A673 (cell line): ENCODE measurements at regions of chr9 and their contacts with region 1.

Region 1: DNA sequence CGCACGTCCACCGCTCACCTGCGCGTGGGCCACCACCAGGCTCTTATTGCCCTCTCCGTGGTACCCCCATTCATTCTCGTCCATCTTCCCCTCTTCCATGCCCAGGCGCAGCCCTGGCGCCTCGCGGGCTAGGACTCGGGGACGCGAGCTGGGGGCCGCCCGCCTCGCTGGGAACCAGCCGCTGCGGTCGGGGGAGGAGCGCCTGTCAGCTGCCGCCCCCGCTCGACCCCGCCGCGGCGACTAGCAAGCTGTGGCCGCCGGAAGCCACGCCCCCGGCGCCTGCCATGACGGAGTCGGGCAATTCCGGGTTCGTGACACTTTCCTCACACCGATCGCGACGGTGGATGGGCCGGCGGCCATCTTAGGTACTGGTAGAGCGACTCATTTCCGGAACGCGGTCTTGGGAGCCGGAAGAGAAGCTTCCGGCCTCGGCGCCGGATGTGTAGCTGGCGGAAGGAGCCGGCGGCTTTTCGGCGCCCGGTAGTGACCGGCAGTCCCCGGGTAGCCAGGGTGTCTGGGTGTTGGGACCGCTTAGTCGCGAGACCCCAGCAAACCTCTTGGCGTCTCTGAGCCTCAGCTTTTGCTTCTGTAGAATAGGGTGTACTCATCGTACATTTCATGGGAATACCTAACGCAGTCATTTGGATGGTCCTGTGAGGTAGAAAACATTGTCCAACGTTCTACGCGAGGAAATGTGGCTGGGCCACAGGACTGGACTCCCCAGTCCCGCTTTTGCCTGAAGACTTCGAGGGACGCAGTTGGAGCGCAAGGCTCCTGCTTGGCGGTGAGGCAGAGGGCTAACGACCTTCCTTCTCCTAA is at the start of gene IPPK:
- DNase-seq: peak; percentile 99
- H3K4me3 ChIP-seq: peak within 1 kb of the TSS; percentile 78
- H3K27ac ChIP-seq: peak within 1 kb of the TSS; percentile 86
- H3K4me1 ChIP-seq: peaks cover 6% of the 10 kb centered on the region
- H3K27me3 ChIP-seq: no peaks in the 10 kb centered on the region
- CTCF ChIP-seq: no peak
- total RNA-seq, gene IPPK: 11.4 and 14.0 TPM in 2 replicates

Region 2: DNA sequence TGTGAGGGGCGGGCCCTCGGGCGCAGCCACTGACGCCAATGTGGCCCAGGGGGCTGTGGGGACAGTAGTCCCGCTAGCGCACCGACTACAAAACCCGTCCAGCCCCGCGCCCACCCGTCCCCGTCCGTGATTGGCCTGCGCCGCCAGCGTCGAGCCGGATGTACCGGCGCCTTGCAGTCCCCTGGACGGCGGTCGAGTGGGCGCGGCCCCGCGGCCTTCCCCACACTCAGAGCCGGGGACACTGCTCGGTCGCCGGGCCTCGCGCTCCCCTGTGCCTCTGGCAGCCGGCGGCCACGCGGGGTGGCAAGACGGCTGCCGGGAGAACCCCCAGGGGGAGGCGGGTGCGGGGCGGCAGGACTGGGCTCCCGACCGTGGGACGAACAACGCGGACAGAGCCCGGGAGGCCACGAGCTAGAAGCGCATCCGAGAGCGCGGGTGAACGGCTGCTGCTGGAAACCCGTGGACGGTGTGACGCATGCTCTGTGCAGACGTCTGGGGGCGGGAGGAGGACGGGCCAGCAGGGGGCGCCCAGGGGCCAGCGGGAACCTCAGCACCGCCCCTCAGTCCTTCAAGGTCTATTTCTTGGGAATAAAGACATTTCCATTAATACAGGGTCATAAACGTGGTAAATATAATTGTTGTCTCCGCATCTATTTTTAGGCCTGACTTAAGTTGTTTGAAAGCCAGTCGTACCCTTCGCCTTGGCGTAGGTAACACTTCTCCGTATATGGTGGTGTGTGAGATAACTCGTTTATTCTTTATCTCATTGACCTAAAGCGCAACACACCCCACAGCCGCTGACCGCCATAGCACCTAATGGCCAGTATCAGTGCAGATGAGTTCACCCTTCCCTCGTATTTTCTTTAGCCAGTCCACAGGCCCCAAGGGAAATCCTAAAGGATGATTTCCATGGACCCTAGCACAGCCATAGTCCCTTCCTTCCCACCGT is 95.2 kb after region 1 on chr9:
- CTCF ChIA-PET with region 1: no interaction called
- POLR2A ChIA-PET with region 1: no interaction called
- intact Hi-C with region 1: loop called (anchors 2 kb)
- DNase-seq: peak; percentile 99
- H3K4me3 ChIP-seq: peak overlapping the region; percentile 98
- H3K27ac ChIP-seq: peak overlapping the region; percentile 99
- H3K4me1 ChIP-seq: peaks cover 15% of the 10 kb centered on the region
- H3K27me3 ChIP-seq: no peaks in the 10 kb centered on the region
- CTCF ChIP-seq: peak; percentile 98

Region 3: DNA sequence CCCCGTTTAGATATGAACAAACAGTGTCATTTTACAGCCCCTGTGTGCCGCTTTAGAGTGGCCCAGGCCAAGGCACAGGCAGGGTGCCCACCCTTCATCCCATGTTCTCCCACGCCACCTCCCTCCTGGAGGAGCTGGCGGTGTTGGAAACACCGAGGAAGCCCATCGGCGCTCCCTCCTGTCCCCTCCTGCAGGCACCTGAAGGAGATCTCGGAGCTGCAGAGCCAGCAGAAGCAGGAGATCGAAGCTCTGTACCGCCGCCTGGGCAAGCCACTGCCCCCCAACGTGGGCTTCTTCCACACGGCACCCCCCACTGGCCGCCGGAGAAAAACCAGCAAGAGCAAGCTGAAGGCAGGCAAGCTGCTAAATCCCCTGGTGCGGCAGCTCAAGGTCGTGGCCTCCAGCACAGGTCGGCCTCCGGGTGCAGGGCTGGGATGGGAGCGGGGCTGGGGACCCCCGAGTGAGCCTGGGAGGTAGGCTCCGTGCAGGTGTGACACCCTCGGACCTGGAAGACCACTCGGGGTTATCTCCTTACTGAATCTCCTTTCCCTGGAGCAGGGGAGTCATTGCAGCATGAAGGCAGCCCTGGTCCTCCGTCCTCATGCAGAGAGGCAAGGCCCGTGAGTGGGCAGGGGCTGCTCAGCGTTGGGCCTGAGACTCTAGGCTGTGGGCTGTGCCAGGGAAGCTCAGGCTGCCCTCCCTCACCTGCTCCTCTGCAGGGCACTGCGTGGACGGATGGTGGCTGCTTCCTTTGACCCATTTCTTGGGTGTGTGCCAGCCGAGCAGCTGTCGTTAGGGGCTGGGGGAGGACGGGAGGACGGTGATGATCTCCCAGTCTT is 627.8 kb after region 1 on chr9:
- CTCF ChIA-PET with region 1: no interaction called
- POLR2A ChIA-PET with region 1: no interaction called
- intact Hi-C with region 1: no loop called
- DNase-seq: no peak
- H3K4me3 ChIP-seq: no peak overlapping the region
- H3K27ac ChIP-seq: no peak overlapping the region
- H3K4me1 ChIP-seq: no peaks in the 10 kb centered on the region
- H3K27me3 ChIP-seq: peaks cover 8% of the 10 kb centered on the region
- CTCF ChIP-seq: no peak